Esophagus squamous epithelium (tissue), 5 donors: ENCODE measurements at regions of chr6 and their contacts with region 1.

Region 1: DNA sequence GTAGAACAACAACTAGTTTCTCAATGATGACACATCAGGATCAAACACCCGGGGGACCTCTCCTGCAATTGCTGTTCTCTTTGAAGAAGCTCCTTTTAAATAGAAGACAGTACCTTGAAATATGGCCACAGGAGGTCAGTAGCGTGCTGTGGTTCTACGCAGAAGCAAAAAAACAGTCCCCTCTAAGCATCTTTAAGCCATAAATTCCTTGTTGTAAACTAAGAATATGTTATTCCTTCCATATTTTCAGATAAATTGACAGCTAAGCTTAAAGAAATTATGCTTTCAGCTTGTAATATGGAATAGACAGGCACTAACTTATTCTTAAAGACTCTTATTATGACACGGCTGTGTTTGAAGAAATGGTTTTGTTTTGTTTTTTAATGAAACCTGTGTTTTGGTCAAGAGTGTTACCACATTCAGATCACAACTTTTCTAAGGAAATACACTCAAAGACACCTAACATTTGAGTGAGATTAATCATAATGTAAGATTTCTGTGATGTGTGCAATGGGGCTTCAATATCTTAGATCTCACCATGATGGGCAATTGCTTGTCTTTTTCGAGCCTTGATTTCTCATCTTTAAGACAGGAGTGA is 49.7 kb upstream of the IL20RA start:
- DNase-seq: no peak
- H3K4me3 ChIP-seq: no peak overlapping the region
- H3K27ac ChIP-seq: no peak overlapping the region
- H3K4me1 ChIP-seq: peaks cover 0 to 11% (median 0%) of the 10 kb centered on the region in 3 donors
- H3K27me3 ChIP-seq: no peaks in the 10 kb centered on the region
- CTCF ChIP-seq: peak; percentile 59 to 87 (median 72)
- POLR2A ChIP-seq: no peak

Region 2: DNA sequence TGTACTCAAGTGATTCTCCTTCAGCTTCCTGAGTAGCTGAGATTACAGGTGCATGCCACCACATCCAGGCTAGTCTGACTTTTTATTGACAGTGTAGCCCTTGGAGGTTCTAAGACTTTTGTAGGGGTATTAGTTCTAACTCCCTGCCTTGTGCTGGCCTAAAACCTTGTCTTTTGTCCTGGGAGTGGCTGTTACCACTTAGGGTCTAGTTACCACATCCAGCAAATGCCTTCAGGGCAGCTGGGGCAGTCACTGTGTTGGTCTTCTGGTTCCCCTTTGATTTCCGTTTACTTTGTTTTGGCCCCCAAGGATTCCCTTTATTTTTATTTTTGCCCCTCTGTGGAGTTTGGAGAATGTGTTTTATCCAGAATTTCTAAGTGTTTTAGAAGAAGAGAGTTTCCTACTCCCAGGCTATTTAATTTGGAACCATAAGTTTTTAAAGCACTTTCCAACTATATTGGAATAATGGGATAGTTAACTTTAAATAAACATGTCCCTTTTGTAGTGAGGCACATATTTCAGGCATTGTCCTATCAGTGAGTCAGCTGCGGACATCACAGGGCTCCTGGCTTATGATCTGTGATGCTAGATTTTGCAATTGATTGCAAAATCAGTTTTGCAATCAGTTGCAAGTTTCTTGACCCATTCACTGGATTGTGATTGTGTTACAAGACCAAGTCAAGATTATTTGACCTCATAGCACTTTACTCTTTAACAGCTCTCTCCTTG is 54.0 kb after region 1 on chr6:
- intact Hi-C with region 1: no loop called
- DNase-seq: no peak
- H3K4me3 ChIP-seq: no peak overlapping the region
- H3K27ac ChIP-seq: peak overlapping the region in 3 of 4 donors; percentile 26 to 50 (median 47)
- H3K4me1 ChIP-seq: peaks cover 0 to 4% (median 0%) of the 10 kb centered on the region in 3 donors
- H3K27me3 ChIP-seq: no peaks in the 10 kb centered on the region
- CTCF ChIP-seq: no peak
- POLR2A ChIP-seq: no peak

Region 3: DNA sequence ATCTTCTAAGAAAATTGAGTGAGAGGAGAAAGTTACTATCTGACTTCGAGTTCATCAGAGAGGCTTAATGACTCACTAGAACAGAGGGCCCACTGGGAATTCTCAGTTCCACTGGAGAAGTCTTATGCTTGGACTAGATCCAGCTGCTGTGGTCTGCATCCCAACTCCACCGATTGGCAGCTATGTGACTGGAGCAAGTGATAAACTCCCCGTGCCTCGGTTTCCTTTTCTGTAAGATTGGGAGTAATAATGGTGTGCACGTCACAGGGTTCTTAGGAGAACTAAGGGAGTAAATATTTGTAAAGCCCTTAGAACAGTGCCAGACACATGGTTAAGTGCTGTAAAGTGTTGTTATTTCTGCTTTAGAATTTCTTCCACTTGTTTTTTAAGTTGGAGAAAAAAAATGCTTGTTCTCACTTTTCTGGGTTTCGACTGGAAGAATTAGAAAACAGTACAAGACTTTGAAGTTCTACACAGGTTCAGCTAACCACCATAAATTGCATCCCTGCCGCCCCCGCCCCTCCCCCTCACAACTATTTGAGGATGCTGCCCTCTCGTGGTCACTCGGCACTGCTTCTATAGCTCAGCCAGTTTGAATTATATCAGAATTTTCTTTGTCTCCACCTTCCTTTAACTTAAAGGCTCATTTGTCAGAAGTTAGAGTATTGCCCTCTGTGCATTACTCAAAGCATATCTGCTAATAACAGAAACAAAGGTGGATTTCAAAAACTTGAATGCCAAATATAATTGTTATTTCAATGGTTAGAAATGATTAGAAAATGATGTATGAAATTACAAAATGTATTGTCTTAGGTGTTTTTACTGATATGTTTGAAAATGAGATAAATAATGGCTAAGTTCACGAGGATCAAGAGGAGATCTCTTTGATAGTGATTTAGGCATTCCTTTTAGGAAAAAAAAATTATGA is 219.7 kb after region 1 on chr6:
- intact Hi-C with region 1: loop called (anchors 10 kb)
- DNase-seq: peak; percentile 25
- H3K4me3 ChIP-seq: peak overlapping the region in 1 of 4 donors; percentile 8
- H3K27ac ChIP-seq: no peak overlapping the region
- H3K4me1 ChIP-seq: peaks cover 3 to 20% (median 5%) of the 10 kb centered on the region in 3 donors
- H3K27me3 ChIP-seq: no peaks in the 10 kb centered on the region
- CTCF ChIP-seq: peak; percentile 78 to 87 (median 86)
- POLR2A ChIP-seq: no peak